Activated naive CD4-positive, alpha-beta T cell treated with anti-CD3 and anti-CD28 coated beads, Interleukin-2, amount 10 ng/mL, durations not matched to agents 7 days and 5 days (primary cell): ENCODE measurements at regions of chr2 and their contacts with region 1.

Region 1: GRCh38 chr2:45778720-45779171 is 127.3 kb downstream of the PRKCE start:
- DNase-seq: peak; percentile 78
- H3K4me3 Mint-ChIP-seq: no peak overlapping the region
- H3K27ac Mint-ChIP-seq: no peak overlapping the region
- H3K4me1 Mint-ChIP-seq: peaks cover 6% of the 10 kb centered on the region
- H3K27me3 Mint-ChIP-seq: peaks cover 4% of the 10 kb centered on the region

Region 2: DNA sequence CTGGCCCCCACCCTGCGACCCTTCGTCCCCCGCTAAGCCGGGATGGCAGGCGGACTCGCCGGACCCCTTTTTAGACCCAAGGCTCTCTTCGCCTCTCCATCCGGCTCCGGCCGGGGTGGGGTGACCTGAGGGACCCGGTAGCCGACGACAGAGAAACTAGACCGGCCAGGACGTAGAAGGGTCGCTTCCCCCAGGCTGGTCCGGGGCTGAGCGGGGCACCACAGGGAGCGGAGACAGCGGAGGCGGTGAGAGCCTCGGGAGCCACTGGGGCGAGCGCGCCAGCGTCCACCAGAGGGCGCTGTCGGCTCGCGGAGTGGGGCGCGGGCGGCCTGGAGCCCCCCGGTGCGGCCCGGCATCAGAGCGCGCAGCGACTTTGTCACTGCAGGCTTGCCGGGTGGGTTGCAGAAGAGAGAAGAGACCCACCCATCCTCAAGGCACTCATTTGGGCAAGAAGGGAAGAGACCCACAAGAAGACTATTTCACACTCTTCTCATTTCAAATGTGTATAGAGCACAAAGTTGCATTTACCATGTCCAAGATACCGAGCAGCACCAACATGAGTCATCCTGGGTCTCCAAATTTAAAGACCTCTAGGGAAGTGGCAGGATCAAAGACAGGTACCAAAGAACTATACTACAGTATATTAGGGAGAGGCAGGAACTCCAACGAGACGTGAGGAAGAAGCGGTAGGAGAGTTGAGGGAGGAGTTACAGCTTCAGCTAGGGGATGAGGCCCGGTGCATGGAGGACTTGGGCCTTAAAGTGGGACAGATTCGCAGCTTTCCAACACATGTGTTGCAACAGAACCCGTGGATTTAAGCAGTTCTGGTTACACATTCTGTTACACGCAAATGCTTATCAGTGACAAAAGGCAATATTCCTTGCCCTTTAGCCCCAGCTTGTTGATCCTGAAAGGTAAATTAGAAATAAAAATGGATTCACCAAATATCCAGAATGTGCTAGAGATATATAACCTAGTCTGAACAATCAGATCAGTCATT is 134.9 kb before region 1 on chr2:
- CTCF ChIA-PET with region 1: interaction called, 18 read pairs
- DNase-seq: peak; percentile 73
- H3K4me3 Mint-ChIP-seq: peak overlapping the region; percentile 47
- H3K27ac Mint-ChIP-seq: no peak overlapping the region
- H3K4me1 Mint-ChIP-seq: peaks cover 6% of the 10 kb centered on the region
- H3K27me3 Mint-ChIP-seq: peaks cover 72% of the 10 kb centered on the region

Region 3: GRCh38 chr2:45650851-45651414 is 127.8 kb before region 1 on chr2:
- CTCF ChIA-PET with region 1: interaction called, 17 read pairs
- DNase-seq: peak; percentile 95
- H3K4me3 Mint-ChIP-seq: peak overlapping the region; percentile 93
- H3K27ac Mint-ChIP-seq: peak overlapping the region; percentile 94
- H3K4me1 Mint-ChIP-seq: peaks cover 26% of the 10 kb centered on the region
- H3K27me3 Mint-ChIP-seq: peaks cover 44% of the 10 kb centered on the region

Region 4: GRCh38 chr2:45789961-45790723 is 11.4 kb after region 1 on chr2:
- CTCF ChIA-PET with region 1: interaction called, 30 read pairs
- DNase-seq: no peak
- H3K4me3 Mint-ChIP-seq: no peak overlapping the region
- H3K27ac Mint-ChIP-seq: no peak overlapping the region
- H3K4me1 Mint-ChIP-seq: peaks cover 14% of the 10 kb centered on the region
- H3K27me3 Mint-ChIP-seq: no peaks in the 10 kb centered on the region

Region 5: DNA sequence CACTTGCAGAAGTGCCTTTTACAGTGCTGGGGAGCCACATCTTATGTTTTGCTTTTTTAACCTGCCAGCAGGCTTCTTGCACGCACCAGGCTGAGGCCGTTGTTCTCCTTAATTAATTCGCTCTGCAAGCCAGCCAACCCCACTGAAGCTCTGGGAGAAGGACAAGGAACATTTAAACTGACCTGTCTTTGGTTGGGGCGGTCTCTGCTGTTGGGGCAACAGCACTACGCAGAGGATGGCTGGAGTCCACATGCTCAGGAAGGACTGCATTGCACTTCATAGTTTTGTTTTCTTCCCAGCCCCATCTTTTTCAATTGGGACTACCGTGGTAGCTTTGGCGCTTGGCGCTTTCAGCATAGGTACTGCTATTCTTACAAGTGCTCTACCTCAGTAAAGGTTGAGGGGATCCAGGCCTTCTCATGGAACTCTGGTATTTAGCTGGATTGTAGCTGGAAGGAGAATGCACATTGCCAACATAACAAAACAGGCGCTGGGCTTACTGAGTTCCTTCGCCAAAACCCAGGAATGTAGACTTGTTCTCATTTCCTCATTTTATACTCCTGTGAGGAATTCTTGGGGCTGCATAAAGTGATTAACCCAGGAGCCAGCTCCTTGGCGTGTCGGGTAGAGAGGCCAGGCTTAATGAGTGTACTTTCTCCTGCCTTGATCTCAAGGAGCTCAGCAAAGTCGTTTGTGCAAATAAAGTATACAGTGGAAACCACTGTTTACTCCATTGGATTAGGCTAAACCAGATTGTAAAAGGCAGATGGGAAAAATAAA is 18.9 kb after region 1 on chr2:
- CTCF ChIA-PET with region 1: interaction called, 30 read pairs
- DNase-seq: no peak
- H3K4me3 Mint-ChIP-seq: no peak overlapping the region
- H3K27ac Mint-ChIP-seq: no peak overlapping the region
- H3K4me1 Mint-ChIP-seq: no peaks in the 10 kb centered on the region
- H3K27me3 Mint-ChIP-seq: no peaks in the 10 kb centered on the region

Region 6: GRCh38 chr2:45935791-45936622 is 157.3 kb after region 1 on chr2:
- CTCF ChIA-PET with region 1: interaction called, 57 read pairs
- DNase-seq: peak; percentile 73
- H3K4me3 Mint-ChIP-seq: no peak overlapping the region
- H3K27ac Mint-ChIP-seq: no peak overlapping the region
- H3K4me1 Mint-ChIP-seq: no peaks in the 10 kb centered on the region
- H3K27me3 Mint-ChIP-seq: no peaks in the 10 kb centered on the region